ENCODE measurements at regions of chr4 and their contacts with region 1.

Region 1: DNA sequence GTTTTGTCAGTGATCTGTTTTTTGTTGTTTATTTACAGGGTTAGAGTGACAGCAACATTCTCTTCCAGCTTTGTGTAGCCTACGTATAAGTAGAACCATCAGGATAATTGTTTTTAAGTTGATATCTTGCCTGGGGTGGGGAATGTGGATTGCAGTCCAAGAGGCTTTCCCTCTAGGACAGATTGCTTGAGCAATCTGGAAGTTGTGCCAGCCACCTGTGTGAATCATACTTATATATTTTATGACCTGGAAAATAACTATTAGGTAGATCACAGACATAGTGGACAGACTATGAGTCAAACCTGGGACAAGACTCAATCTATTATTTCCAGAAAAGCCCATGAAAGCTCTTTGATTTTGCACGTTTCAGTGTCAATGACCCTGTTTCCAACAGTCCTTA is 98.9 kb downstream of the TLL1 start:
- DNase-seq: peak; percentile 90
- ATAC-seq: peak; percentile 85
- H3K4me3 ChIP-seq: peak overlapping the region; percentile 30; the same call in 1 of the 2 replicates
- H3K27ac ChIP-seq: peak overlapping the region; percentile 89
- H3K4me1 ChIP-seq: peaks cover 34% of the 10 kb centered on the region
- H3K27me3 ChIP-seq: no peaks in the 10 kb centered on the region
- CTCF ChIP-seq: no peak

Region 2: DNA sequence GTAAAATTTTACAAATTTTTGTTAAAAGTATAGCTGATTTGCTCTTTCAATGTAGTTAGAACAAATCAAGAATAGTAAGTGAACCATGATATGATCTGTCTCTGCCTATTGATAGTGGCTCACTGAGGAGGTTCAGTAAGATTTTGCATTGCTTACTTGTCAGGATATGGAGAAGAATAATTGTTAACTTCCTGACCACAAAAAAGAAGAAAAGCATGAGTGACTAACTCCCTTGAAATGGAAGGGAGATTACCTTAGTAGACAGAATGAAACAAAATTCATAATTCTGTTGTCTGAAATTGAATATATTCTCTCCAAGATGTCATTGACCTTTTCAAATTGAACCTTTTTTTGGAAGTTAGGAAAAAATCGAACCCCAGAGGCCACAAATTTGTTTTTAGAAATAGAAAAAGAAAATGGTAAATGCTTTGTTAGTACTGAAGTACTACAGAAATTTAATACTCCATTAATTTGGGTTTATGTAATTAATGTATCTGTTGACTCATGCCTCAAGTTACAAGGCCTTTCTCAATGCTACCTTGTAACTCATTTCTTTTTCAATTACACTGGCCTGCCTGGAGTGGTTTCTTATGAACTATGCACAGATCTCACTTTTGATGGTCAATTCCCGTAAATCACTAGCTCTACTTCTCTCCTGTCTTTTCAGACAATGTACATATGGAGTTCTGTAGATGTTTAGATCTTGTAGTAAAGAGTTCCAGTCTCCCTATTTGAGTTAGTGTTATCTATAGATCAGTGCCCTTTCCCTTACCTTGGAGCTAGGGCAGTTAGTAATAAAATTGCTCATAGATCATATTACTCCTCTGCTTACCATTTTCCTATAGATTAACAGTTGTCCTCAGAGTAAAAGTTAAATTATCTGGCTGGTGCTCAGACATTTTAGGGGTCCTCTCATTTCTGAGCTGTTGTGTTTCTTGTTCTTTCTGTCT is 40.5 kb after region 1 on chr4:
- CTCF ChIA-PET with region 1: no interaction called
- POLR2A ChIA-PET with region 1: no interaction called
- intact Hi-C with region 1: loop called (anchors 5 kb)
- DNase-seq: peak; percentile 71
- ATAC-seq: peak; percentile 73
- H3K4me3 ChIP-seq: peak overlapping the region; percentile 48
- H3K27ac ChIP-seq: peak overlapping the region; percentile 91
- H3K4me1 ChIP-seq: peaks cover 44% of the 10 kb centered on the region
- H3K27me3 ChIP-seq: no peaks in the 10 kb centered on the region
- CTCF ChIP-seq: no peak

Region 3: GRCh38 chr4:167826281-167826680 is 1854.4 kb after region 1 on chr4:
- CTCF ChIA-PET with region 1: no interaction called
- POLR2A ChIA-PET with region 1: no interaction called
- intact Hi-C with region 1: no loop called
- DNase-seq: peak; percentile 2
- ATAC-seq: no peak
- H3K4me3 ChIP-seq: no peak overlapping the region
- H3K27ac ChIP-seq: no peak overlapping the region
- H3K4me1 ChIP-seq: peaks cover 4% of the 10 kb centered on the region; the same call in 1 of the 2 replicates
- H3K27me3 ChIP-seq: no peaks in the 10 kb centered on the region
- CTCF ChIP-seq: no peak